Natural killer cell (primary cell): ENCODE measurements at regions of chr12 and their contacts with region 1.

Region 1: GRCh38 chr12:108731105-108731865 is at the start of gene CORO1C:
- DNase-seq: peak; percentile 96 to 98
- ATAC-seq: peak; percentile 82 to 94 (median 85)
- H3K4me3 ChIP-seq: peak within 1 kb of the TSS; percentile 76
- H3K4me3 Mint-ChIP-seq: peak within 1 kb of the TSS; percentile 93
- H3K27ac ChIP-seq: peak within 1 kb of the TSS; percentile 79
- H3K27ac Mint-ChIP-seq: peak within 1 kb of the TSS; percentile 89 to 97
- H3K4me1 ChIP-seq: peaks cover 21% of the 10 kb centered on the region
- H3K4me1 Mint-ChIP-seq: peaks cover 35 to 39% of the 10 kb centered on the region in 2 donors
- H3K27me3 ChIP-seq: no peaks in the 10 kb centered on the region
- H3K27me3 Mint-ChIP-seq: no peaks in the 10 kb centered on the region
- CTCF ChIP-seq: peak; percentile 82
- total RNA-seq, gene CORO1C: 28.9 to 43.5 (median 36.0) TPM

Region 2: DNA sequence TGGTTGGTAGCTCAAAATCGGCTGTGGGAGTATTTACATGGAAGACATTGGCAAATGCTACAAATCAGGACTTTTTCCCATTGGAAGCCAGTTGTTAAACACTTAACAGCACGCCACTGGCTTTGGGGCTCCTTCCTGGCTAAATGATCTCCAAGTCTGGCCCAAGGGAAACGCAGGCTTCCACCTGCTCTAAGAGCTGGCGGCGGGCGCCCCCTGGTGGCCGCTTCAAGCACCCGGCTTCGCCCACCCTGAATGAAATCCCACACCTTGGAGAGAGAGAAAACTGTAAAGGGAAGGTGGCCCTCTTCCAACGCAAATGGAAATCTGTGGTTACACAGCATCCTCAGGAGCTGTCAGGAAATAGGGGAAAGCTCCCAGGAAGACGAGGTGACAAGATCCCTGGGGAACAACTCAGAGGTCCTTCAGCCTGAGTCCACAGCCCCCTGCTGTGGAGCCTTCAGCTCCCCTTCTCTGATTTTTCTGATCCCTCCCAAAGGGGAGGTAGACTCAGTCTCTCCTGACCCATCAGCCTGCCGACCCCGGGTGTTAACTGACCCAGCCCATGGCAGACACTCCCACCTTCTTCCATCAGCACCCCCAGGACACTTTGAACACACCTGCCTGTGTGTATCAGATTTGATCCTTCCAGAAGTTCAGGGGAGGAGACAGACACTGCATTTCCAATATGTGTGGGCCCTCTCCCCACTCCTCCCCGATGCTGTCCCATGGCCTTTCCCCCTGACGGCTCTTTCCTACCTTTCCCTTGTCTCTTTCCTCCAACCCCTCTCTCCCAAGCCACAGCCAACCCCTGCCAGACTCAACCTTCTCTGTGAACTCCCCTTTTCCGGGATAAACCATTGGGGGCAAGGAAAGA is 113.0 kb before region 1 on chr12:
- intact Hi-C with region 1: loop called (anchors 5 kb)
- DNase-seq: peak; percentile 76 to 89
- ATAC-seq: peak; percentile 39 to 65 (median 45)
- H3K4me3 ChIP-seq: no peak overlapping the region
- H3K4me3 Mint-ChIP-seq: peak overlapping the region; percentile 56
- H3K27ac ChIP-seq: peak overlapping the region; percentile 79
- H3K27ac Mint-ChIP-seq: peak overlapping the region; percentile 92 to 100
- H3K4me1 ChIP-seq: peaks cover 56% of the 10 kb centered on the region
- H3K4me1 Mint-ChIP-seq: peaks cover 68 to 70% of the 10 kb centered on the region in 2 donors
- H3K27me3 ChIP-seq: no peaks in the 10 kb centered on the region
- H3K27me3 Mint-ChIP-seq: no peaks in the 10 kb centered on the region
- CTCF ChIP-seq: peak; percentile 98

Region 3: GRCh38 chr12:108633534-108634248 is 97.6 kb before region 1 on chr12 and contains the start of gene SELPLG:
- intact Hi-C with region 1: loop called (anchors 2 kb)
- DNase-seq: peak; percentile 84 to 95
- ATAC-seq: peak; percentile 38 to 84 (median 69)
- H3K4me3 ChIP-seq: peak within 1 kb of the TSS; percentile 58
- H3K4me3 Mint-ChIP-seq: peak within 1 kb of the TSS; percentile 100
- H3K27ac ChIP-seq: peak within 1 kb of the TSS; percentile 98
- H3K27ac Mint-ChIP-seq: peak within 1 kb of the TSS; percentile 92 to 100
- H3K4me1 ChIP-seq: peaks cover 86% of the 10 kb centered on the region
- H3K4me1 Mint-ChIP-seq: peaks cover 61% of the 10 kb centered on the region in 2 donors
- H3K27me3 ChIP-seq: no peaks in the 10 kb centered on the region
- H3K27me3 Mint-ChIP-seq: no peaks in the 10 kb centered on the region
- CTCF ChIP-seq: no peak
- total RNA-seq, gene SELPLG: 179 to 201 (median 201) TPM

Region 4: GRCh38 chr12:108664338-108665258 is 66.7 kb before region 1 on chr12:
- intact Hi-C with region 1: loop called (anchors 2 kb)
- DNase-seq: peak; percentile 65 to 90
- ATAC-seq: peak; percentile 99 to 100 (median 100)
- H3K4me3 ChIP-seq: no peak overlapping the region
- H3K4me3 Mint-ChIP-seq: no peak overlapping the region
- H3K27ac ChIP-seq: peak overlapping the region; percentile 14
- H3K27ac Mint-ChIP-seq: peak overlapping the region; percentile 63 to 88
- H3K4me1 ChIP-seq: peaks cover 6% of the 10 kb centered on the region
- H3K4me1 Mint-ChIP-seq: peaks cover 5 to 12% of the 10 kb centered on the region in 2 donors
- H3K27me3 ChIP-seq: no peaks in the 10 kb centered on the region
- H3K27me3 Mint-ChIP-seq: no peaks in the 10 kb centered on the region
- CTCF ChIP-seq: peak; percentile 84

Region 5: GRCh38 chr12:108691175-108691997 is 39.9 kb before region 1 on chr12:
- intact Hi-C with region 1: loop called (anchors 2 kb)
- DNase-seq: peak; percentile 60 to 76
- ATAC-seq: peak; percentile 92 to 95 (median 93)
- H3K4me3 ChIP-seq: peak overlapping the region; percentile 1
- H3K4me3 Mint-ChIP-seq: peak overlapping the region; percentile 83
- H3K27ac ChIP-seq: peak overlapping the region; percentile 55
- H3K27ac Mint-ChIP-seq: peak overlapping the region; percentile 54 to 91
- H3K4me1 ChIP-seq: peaks cover 31% of the 10 kb centered on the region
- H3K4me1 Mint-ChIP-seq: peaks cover 33 to 35% of the 10 kb centered on the region in 2 donors
- H3K27me3 ChIP-seq: no peaks in the 10 kb centered on the region
- H3K27me3 Mint-ChIP-seq: no peaks in the 10 kb centered on the region
- CTCF ChIP-seq: no peak

Region 6: DNA sequence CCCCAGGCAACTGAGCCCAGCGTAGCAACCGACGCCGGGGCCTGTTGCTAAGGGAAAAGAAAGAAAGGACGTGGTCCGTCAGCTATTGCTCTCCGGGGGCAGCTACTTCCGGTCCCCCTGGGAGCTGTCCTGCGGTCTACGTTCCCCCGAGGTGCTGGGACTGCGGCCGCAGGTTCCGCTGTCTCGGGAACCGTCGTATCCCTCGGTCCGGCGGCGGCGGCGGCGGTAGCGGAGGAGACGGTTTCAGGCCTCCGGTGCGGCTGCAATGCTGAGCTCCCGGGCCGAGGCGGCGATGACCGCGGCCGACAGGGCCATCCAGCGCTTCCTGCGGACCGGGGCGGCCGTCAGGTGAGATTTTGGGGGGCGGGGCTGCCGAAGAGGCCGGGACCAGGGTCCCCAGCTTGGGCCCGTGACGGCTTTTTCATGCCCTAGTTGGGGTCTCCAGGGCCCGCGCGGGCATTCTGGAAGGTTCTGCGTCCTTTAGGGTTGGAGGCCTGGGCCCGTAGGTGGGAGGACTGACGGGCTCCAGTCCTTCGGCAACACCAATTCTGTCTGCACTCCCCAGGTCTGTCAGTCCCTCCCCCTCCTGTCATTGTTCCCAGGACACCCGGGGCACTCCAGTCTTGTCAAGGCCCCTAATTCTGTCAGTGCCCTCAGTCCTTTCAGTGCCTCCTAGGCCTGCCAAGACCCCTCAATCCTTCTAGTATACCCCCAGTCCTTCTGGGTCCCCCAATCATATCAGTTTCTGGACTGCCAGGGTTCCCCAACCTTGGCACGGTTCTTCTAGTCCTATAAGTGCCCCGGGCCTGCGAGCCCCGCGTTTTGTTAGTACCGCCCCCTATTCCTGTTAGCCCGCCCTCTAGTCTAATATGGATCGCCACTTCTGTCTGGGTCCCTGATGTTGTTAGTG is 321.4 kb after region 1 on chr12 and contains the start of gene USP30:
- intact Hi-C with region 1: loop called (anchors 10 kb)
- DNase-seq: peak; percentile 83 to 94
- ATAC-seq: peak; percentile 65 to 90 (median 85)
- H3K4me3 ChIP-seq: peak within 1 kb of the TSS; percentile 87
- H3K4me3 Mint-ChIP-seq: peak within 1 kb of the TSS; percentile 99
- H3K27ac ChIP-seq: peak within 1 kb of the TSS; percentile 94
- H3K27ac Mint-ChIP-seq: peak within 1 kb of the TSS; percentile 94 to 97
- H3K4me1 ChIP-seq: peaks cover 23% of the 10 kb centered on the region
- H3K4me1 Mint-ChIP-seq: peaks cover 23 to 27% of the 10 kb centered on the region in 2 donors
- H3K27me3 ChIP-seq: no peaks in the 10 kb centered on the region
- H3K27me3 Mint-ChIP-seq: no peaks in the 10 kb centered on the region
- CTCF ChIP-seq: no peak
- total RNA-seq, gene USP30: 18.4 to 20.8 (median 20.1) TPM

Region 7: DNA sequence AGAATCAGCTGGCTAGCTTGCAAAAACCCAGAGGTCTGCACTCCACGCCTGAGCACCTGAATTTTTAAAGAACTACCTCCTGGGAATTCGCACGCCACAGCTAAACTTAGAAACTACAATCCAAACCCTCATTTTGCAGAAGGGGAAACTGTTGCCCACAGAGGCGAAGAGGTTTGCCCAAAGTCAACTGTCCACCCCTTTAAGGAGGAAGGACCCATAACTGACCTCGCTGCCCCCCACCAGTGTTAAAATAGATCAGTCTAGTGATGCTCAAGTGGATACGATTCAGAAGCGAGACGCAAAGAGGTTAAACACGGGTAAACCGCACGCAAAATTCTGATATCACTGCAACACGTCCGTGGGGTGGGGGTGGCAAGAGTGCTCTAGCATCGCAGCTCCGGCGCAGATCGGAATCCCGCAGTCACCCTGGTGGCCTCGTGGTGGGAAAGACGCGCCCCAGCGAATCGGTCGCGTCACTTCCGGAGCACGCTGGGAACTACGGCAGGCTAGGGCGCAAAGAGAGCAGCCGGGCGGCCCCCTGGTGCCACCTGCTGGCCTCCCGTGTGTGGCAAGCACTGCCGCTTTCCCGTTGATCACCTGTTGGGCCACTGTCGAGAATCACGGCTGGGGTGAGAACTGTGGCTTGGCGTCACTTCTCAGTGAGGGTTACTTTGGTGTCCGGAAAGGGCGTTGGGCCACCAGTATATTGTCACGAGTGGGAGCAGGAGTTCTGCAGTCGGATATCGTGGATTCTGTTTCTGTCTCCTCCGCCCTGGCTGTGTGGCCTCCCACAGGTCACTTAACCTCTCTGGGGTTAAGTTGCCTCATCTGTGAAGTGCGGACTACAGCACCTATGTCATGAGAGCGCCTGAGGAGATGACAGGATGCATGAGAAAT is 362.0 kb after region 1 on chr12 and contains the start of gene ALKBH2:
- intact Hi-C with region 1: loop called (anchors 5 kb)
- DNase-seq: peak; percentile 96 to 98
- ATAC-seq: peak; percentile 82 to 92 (median 82)
- H3K4me3 ChIP-seq: peak within 1 kb of the TSS; percentile 58
- H3K4me3 Mint-ChIP-seq: peak within 1 kb of the TSS; percentile 86
- H3K27ac ChIP-seq: peak within 1 kb of the TSS; percentile 63
- H3K27ac Mint-ChIP-seq: peak within 1 kb of the TSS; percentile 90 to 93
- H3K4me1 ChIP-seq: peaks cover 30% of the 10 kb centered on the region
- H3K4me1 Mint-ChIP-seq: peaks cover 26 to 33% of the 10 kb centered on the region in 2 donors
- H3K27me3 ChIP-seq: no peaks in the 10 kb centered on the region
- H3K27me3 Mint-ChIP-seq: no peaks in the 10 kb centered on the region
- CTCF ChIP-seq: peak; percentile 93
- total RNA-seq, gene ALKBH2: 10.9 to 12.6 (median 11.9) TPM